Posterior vena cava (tissue), 2 donors: ENCODE measurements at regions of chr20 and their contacts with region 1.

Region 1: DNA sequence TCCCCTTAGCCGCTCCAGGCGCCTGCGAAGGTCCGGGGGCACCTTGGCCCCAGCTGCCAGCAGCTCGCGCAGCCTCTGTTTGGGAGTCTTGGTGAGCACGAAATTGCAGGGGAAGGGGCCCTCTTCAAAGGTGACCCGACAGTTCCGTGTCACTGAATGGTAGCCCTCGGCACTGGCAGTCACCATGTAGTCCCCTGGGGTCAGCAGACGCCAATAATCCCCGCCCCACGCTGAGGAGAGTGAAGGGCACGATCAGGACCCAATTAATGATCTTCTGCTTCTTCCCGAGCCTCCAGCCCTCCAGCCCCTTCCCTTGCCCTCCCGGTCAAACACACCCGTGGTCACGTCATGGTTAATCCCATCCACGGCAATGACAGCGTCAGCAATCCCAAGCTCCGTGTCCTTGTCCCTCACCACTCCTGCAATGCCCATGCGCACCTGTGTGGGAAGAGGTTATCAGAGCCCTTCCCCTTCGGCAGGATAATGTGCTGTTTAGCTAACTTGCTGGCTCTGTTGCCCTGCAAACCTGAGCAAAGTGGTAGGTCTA is 6.2 kb downstream of the CPXM1 start:
- DNase-seq: peak; percentile 56

Region 2: GRCh38 chr20:2767768-2768631 is 26.3 kb before region 1 on chr20:
- intact Hi-C with region 1: loop called in 1 of 2 experiments (anchors 2 kb)
- DNase-seq: peak; percentile 74